ENCODE measurements at regions of chr11 and their contacts with region 1.

Region 1: DNA sequence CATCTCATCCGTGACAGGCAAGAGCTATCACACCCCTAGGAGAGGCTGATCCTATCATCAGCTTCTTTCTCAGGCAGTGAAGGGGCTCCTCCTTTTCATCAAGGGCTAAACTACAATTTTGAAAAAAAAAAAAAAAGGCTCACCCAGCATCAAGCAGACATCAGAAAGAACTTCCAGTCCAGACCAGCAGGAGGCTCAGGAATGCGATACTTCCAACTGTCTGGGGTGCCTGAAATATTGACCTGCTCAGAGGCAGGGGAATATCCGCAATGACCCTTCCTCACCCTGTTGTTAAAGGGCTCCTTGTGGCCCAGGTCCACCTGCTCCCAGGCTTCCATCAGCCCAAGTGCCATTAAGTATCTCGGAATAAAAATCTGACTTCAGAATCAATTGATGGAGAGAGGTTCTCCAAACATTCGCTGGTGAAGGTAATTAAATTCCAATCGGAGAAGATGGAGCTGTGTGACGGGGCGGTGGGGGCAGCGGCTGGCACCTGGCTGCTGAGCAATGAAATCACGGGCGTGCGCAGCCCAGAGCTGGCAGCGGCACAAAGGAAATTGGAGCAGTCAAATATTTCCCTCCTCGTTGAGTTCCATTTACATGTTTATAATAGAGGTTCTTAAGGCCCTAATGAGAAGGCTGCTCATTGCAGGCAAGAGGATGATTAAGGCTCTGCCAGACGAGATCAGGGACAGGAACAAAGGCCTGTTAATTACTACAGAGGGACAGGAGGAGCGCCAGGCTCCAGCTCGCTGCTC is 69.0 kb upstream of the THY1 start:
- DNase-seq: no peak
- H3K4me3 ChIP-seq: no peak overlapping the region
- H3K27ac ChIP-seq: no peak overlapping the region
- H3K4me1 ChIP-seq: peaks cover 0 to 5% (median 2%) of the 10 kb centered on the region in 4 experiments; a peak in 5 of 7 replicates
- H3K27me3 ChIP-seq: no peaks in the 10 kb centered on the region
- CTCF ChIP-seq: peak in 1 of 3 experiments; percentile 13; a peak in 2 of 4 replicates
- EP300 ChIP-seq: no peak
- POLR2A ChIP-seq: no peak
- RAD21 ChIP-seq: peak in 1 of 2 experiments; percentile 38; a peak in 2 of 4 replicates

Region 2: DNA sequence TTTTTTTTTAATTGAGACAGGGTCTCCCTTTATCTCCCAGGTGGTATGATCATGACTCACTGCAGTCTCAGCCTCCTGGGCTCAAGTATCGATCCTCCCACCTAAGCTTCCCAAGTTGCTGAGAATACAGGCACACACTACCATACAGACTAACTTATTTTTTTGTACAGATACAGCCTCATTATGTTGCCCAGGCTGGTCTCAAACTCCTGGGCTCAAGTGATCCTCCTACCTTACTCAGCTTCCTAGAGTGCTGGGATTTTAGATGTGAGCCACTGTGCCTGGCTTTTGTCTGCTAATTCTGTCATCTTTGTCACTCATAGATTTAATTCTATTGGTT is 242.3 kb before region 1 on chr11:
- CTCF ChIA-PET with region 1: no interaction called
- POLR2A ChIA-PET with region 1: no interaction called
- DNase-seq: no peak
- H3K4me3 ChIP-seq: no peak overlapping the region
- H3K27ac ChIP-seq: no peak overlapping the region
- H3K4me1 ChIP-seq: no peaks in the 10 kb centered on the region
- H3K27me3 ChIP-seq: no peaks in the 10 kb centered on the region
- CTCF ChIP-seq: no peak
- EP300 ChIP-seq: no peak
- POLR2A ChIP-seq: no peak
- RAD21 ChIP-seq: no peak

Region 3: GRCh38 chr11:119509969-119510401 is 18.1 kb after region 1 on chr11:
- CTCF ChIA-PET with region 1: interaction called, 12 read pairs
- POLR2A ChIA-PET with region 1: interaction called, 3 read pairs
- DNase-seq: no peak
- H3K4me3 ChIP-seq: no peak overlapping the region
- H3K27ac ChIP-seq: no peak overlapping the region
- H3K4me1 ChIP-seq: peaks cover 0 to 6% (median 1%) of the 10 kb centered on the region in 4 experiments; a peak in 3 of 7 replicates
- H3K27me3 ChIP-seq: no peaks in the 10 kb centered on the region
- CTCF ChIP-seq: no peak
- EP300 ChIP-seq: no peak
- POLR2A ChIP-seq: no peak
- RAD21 ChIP-seq: no peak

Region 4: DNA sequence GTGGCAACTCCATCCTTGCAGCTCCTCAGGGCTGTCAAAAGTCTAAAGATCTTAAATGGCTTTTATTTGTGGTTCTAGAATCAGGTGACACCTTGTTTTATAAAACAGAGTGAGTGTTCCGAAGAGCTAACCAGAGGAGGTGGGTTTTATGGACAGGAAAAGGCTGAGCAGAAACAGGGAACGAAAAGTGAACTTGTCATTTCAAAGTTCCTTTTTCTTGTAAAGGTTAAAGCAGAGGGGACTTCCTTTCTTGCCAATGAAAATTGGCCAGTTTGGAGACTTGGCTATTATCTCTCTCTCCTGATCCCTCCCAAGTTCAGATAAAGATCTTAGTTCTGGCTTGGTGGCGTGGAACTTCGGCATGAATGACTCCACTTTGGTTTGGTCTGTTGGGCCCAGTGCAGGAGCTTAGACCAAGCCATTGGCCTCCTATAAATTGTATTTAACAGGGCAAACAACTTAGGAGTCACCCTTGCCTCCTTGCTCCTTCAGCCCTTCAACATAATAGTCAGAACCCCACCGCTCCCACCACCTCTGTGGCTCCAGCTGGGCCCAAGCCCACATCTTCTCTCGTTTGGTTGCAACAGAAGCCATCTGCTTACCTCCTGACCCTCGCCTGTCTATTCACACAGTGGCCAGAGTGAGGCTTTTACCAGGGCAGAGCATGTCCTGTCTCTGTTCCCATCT is 33.4 kb after region 1 on chr11:
- CTCF ChIA-PET with region 1: interaction called, 160 read pairs
- POLR2A ChIA-PET with region 1: no interaction called
- DNase-seq: no peak
- H3K4me3 ChIP-seq: no peak overlapping the region
- H3K27ac ChIP-seq: no peak overlapping the region
- H3K4me1 ChIP-seq: no peaks in the 10 kb centered on the region; a peak in 1 of 7 replicates
- H3K27me3 ChIP-seq: no peaks in the 10 kb centered on the region
- CTCF ChIP-seq: no peak
- EP300 ChIP-seq: no peak
- POLR2A ChIP-seq: no peak
- RAD21 ChIP-seq: no peak

Region 5: DNA sequence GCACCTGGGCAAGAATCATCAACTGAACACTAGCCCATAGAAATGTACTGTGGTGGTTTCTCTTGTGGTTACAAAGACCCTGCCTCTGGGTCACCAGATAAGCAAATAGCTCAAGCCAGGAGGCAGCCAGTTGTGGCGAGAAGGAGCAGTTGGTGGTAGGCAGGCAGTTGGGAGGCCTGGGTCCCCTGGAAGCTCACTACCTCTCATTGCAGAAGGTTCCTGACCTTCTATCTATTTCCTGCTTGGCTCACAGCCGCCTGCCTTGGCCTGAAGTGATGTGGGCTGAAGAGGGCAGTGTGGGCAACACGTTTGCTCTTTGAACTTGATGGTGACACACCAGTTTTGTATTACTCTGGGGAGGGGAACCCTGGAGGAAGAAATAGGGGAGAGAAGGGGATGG is 202.4 kb after region 1 on chr11:
- CTCF ChIA-PET with region 1: no interaction called
- POLR2A ChIA-PET with region 1: no interaction called
- DNase-seq: no peak
- H3K4me3 ChIP-seq: no peak overlapping the region
- H3K27ac ChIP-seq: no peak overlapping the region
- H3K4me1 ChIP-seq: peaks cover 10 to 68% (median 46%) of the 10 kb centered on the region in 4 experiments
- H3K27me3 ChIP-seq: no peaks in the 10 kb centered on the region
- CTCF ChIP-seq: peak in 2 of 3 experiments; percentile 6 to 30; a peak in 2 of 4 replicates
- EP300 ChIP-seq: no peak
- POLR2A ChIP-seq: no peak
- RAD21 ChIP-seq: peak in 1 of 2 experiments; percentile 25; a peak in 2 of 4 replicates